OCI-LY7 (cell line): ENCODE measurements at regions of chr17 and their contacts with region 1.

Region 1: GRCh38 chr17:59619293-59620063 is at the start of gene CLTC:
- DNase-seq: peak; percentile 97
- H3K4me3 ChIP-seq: peak within 1 kb of the TSS; percentile 98
- H3K27ac ChIP-seq: peak within 1 kb of the TSS; percentile 93
- H3K4me1 ChIP-seq: peaks cover 47% of the 10 kb centered on the region
- CTCF ChIP-seq: no peak
- total RNA-seq, gene CLTC: 123 and 155 TPM in 2 replicates

Region 2: DNA sequence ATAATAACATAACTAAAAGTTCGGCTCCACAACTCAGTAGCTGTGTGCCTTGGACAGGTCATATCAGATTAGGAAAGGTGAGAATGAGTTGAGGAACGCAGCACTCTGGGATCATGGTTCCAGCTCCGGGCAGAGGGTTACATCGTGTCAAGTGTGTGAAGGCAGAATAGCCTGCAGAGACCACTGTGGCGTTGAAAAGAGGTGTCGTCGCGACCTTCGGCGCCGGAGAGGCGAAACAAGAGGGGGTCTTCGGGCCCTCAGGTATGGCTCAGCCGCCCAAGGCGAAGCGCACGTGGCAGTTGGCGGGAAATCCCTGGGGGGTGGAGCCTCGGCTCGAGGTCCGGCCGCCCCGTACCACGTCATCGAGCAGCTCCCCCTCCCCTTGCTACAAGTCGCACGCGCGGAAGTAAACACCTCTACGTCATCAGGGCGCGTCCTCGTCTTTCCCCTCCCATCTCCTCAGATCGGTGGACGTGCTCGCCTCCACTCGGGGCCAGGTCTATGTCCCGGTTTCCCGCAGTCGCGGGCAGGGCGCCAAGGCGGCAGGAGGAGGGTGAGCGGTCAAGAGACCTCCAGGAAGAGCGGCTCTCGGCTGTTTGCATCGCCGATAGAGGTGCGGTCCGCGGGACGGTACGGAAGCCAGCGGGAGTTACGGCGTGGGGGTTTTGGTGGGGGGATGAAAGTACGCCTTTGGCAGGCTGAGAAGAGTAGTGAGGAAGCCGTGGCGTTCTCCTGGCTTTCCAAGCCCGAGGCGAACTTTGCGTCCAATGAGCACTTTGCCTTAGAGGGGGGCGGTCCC is 54.1 kb before region 1 on chr17 and contains the start of gene DHX40:
- CTCF ChIA-PET with region 1: no interaction called
- POLR2A ChIA-PET with region 1: no interaction called
- intact Hi-C with region 1: loop called (anchors 1 kb)
- DNase-seq: peak; percentile 96
- H3K4me3 ChIP-seq: peak within 1 kb of the TSS; percentile 94
- H3K27ac ChIP-seq: peak within 1 kb of the TSS; percentile 33
- H3K4me1 ChIP-seq: peaks cover 14% of the 10 kb centered on the region
- CTCF ChIP-seq: no peak
- total RNA-seq, gene DHX40: 28.6 and 31.4 TPM in 2 replicates

Region 3: GRCh38 chr17:59634632-59635541 is 15.4 kb after region 1 on chr17:
- CTCF ChIA-PET with region 1: no interaction called
- POLR2A ChIA-PET with region 1: interaction called, 10 read pairs
- intact Hi-C with region 1: no loop called
- DNase-seq: no peak
- H3K4me3 ChIP-seq: no peak overlapping the region
- H3K27ac ChIP-seq: peak overlapping the region; percentile 11
- H3K4me1 ChIP-seq: peaks cover 56% of the 10 kb centered on the region
- CTCF ChIP-seq: no peak

Region 4: DNA sequence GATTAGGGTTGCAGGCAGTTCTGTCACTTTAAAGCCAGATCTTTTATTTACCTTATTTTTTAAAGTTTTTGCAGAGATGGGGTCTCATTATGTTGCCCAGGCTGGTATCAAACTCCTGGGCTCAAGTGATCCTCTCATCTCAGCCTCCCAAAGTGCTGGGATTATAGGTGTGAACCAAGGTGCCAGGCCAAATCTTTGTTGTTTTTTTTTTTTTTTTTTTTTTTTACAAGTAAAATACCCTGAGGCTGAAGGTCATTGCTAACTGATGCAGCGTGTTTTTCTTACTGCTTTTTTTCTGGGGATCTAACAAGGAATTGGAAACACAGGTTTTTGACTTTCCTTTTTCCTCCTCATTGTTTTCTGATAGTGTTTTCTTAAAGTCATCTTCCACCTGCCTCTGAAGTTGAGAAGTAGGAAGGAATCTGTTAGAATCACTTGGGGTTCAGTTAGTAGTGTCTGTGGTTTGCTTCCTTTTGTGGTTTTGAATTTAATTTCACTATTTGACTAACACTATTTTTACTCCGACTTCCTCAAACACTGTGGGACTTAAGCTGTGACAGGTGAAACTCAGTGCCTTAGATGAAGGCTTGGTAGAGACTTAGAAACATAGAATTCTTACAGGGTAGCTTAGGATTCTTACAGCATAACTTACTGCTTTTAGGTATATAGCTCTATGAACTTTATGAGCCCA is 22.5 kb after region 1 on chr17:
- CTCF ChIA-PET with region 1: interaction called, 4 read pairs
- POLR2A ChIA-PET with region 1: interaction called, 23 read pairs
- intact Hi-C with region 1: loop called (anchors 1 kb)
- DNase-seq: peak; percentile 88
- H3K4me3 ChIP-seq: peak overlapping the region; percentile 57
- H3K27ac ChIP-seq: peak overlapping the region; percentile 95
- H3K4me1 ChIP-seq: peaks cover 68% of the 10 kb centered on the region
- CTCF ChIP-seq: no peak

Region 5: GRCh38 chr17:59671386-59671785 is 51.9 kb after region 1 on chr17:
- CTCF ChIA-PET with region 1: no interaction called
- POLR2A ChIA-PET with region 1: interaction called, 6 read pairs
- intact Hi-C with region 1: loop called (anchors 5 kb)
- DNase-seq: no peak
- H3K4me3 ChIP-seq: no peak overlapping the region
- H3K27ac ChIP-seq: no peak overlapping the region
- H3K4me1 ChIP-seq: no peaks in the 10 kb centered on the region
- CTCF ChIP-seq: no peak

Region 6: GRCh38 chr17:59707114-59707970 is 87.9 kb after region 1 on chr17 and contains the starts of genes PTRH2 and VMP1:
- CTCF ChIA-PET with region 1: no interaction called
- POLR2A ChIA-PET with region 1: interaction called, 10 read pairs
- intact Hi-C with region 1: no loop called
- DNase-seq: peak; percentile 97
- H3K4me3 ChIP-seq: peak within 1 kb of the TSS; percentile 86
- H3K27ac ChIP-seq: peak within 1 kb of the TSS; percentile 74
- H3K4me1 ChIP-seq: peaks cover 32% of the 10 kb centered on the region
- CTCF ChIP-seq: no peak
- total RNA-seq, gene PTRH2: 27.0 and 33.6 TPM in 2 replicates
- total RNA-seq, gene VMP1: 29.2 and 35.8 TPM in 2 replicates

Region 7: GRCh38 chr17:59725691-59726090 is 106.2 kb after region 1 on chr17:
- CTCF ChIA-PET with region 1: no interaction called
- POLR2A ChIA-PET with region 1: no interaction called
- intact Hi-C with region 1: no loop called
- DNase-seq: no peak
- H3K4me3 ChIP-seq: no peak overlapping the region
- H3K27ac ChIP-seq: no peak overlapping the region
- H3K4me1 ChIP-seq: no peaks in the 10 kb centered on the region
- CTCF ChIP-seq: no peak